ENCODE measurements at regions of chr20 and their contacts with region 1.

Region 1: GRCh38 chr20:52083627-52084232 is 107.8 kb downstream of the ZFP64 start:
- DNase-seq: peak; percentile 54
- H3K4me3 ChIP-seq: no peak overlapping the region
- H3K27ac ChIP-seq: no peak overlapping the region
- H3K27me3 ChIP-seq: no peaks in the 10 kb centered on the region
- CTCF ChIP-seq: peak; percentile 72

Region 2: DNA sequence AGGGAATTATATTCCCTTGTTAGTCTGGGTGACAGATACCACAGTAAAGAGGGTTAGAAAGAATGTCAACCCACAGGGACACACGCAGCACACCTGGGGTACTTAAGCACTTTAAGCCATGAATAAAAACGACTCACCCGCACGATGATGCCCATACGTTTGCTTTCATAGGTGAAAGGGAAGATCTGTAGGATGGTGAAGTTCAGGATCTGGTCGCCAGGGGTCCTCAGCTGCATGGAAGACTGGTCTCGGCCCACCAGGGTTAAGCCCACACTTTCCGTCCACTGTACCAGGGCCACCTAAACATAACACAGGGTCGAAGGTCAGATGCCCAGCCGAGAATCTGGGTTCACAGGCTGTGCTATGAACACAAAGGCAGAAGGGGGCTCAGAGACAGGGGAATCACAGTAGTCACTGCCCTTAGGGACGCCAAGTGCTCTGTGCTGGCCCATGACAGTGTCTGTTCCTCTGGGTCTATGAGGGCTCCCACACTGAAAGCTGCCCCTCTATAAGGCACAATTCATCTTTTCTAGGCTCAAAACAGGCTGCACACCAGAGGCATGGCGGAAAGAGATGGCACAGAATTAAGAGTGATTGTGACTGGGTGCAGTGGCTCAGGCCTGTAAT is 444.4 kb before region 1 on chr20:
- CTCF ChIA-PET with region 1: interaction called, 33 read pairs
- POLR2A ChIA-PET with region 1: no interaction called
- DNase-seq: no peak
- H3K4me3 ChIP-seq: no peak overlapping the region
- H3K27ac ChIP-seq: no peak overlapping the region
- H3K27me3 ChIP-seq: no peaks in the 10 kb centered on the region
- CTCF ChIP-seq: peak; percentile 85

Region 3: GRCh38 chr20:52064931-52065330 is 18.8 kb before region 1 on chr20:
- CTCF ChIA-PET with region 1: interaction called, 10 read pairs
- POLR2A ChIA-PET with region 1: no interaction called
- DNase-seq: no peak
- H3K4me3 ChIP-seq: no peak overlapping the region
- H3K27ac ChIP-seq: no peak overlapping the region
- H3K27me3 ChIP-seq: no peaks in the 10 kb centered on the region
- CTCF ChIP-seq: no peak